Endothelial cell of umbilical vein (primary cell): ENCODE measurements at regions of chr1 and their contacts with region 1.

Region 1: GRCh38 chr1:32716312-32717148 is 14.0 kb upstream of the SYNC start:
- DNase-seq: no peak
- H3K4me3 ChIP-seq: no peak overlapping the region
- H3K27ac ChIP-seq: no peak overlapping the region
- H3K4me1 ChIP-seq: no peaks in the 10 kb centered on the region
- H3K27me3 ChIP-seq: no peaks in the 10 kb centered on the region
- CTCF ChIP-seq: no peak
- POLR2A ChIP-seq: no peak

Region 2: DNA sequence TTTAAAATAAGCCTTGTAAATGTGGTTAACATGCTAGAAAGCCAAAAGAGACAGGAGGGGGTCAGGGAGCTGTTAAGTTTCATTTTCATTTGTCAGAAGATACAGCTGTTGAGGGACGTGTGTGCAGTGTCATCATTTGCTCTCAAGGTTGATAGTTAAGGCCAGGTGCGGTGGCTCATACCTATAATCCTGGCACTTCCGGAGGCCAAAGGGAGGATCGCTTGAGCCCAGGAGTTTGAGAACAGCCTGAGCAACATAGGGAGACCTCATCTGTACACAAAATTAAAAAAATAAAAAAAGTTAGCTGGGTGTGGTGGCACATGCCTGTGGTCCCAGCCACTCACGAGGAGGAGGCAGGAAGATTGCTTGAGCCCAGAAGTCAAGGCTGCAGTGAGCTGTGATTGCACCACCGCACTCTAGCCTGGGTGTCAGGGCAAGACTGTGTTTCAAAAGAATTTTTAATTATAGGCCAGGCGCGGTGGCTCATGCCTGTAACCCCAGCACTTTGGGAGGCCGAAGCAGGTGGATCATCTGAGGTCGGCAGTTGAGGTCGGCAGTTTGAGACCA is 88.9 kb before region 1 on chr1:
- CTCF ChIA-PET with region 1: no interaction called
- POLR2A ChIA-PET with region 1: no interaction called
- dilution Hi-C with region 1: no loop called
- intact Hi-C with region 1: no loop called
- DNase-seq: no peak
- H3K4me3 ChIP-seq: no peak overlapping the region
- H3K27ac ChIP-seq: no peak overlapping the region
- H3K4me1 ChIP-seq: no peaks in the 10 kb centered on the region
- H3K27me3 ChIP-seq: no peaks in the 10 kb centered on the region
- CTCF ChIP-seq: no peak
- POLR2A ChIP-seq: no peak

Region 3: DNA sequence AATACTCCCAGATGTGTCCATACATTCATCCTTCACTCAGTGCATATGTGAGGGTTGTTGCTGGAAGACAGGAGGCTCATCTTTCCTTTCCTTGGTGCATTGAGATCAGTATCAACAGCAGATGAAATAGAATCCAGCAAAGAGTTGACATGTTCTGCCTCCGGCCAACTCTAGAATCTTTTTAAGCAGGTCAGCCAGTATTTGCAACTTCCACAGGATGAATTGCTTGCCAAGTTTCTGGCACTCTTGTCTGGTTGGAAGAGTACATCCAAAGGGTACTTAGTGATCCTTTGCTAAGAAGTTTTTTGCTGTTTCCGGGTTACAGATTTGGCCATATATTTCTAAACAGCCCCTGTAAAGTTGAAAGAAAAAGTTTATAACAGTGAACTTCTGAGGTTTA is 35.0 kb before region 1 on chr1:
- CTCF ChIA-PET with region 1: no interaction called
- POLR2A ChIA-PET with region 1: no interaction called
- dilution Hi-C with region 1: no loop called
- intact Hi-C with region 1: no loop called
- DNase-seq: no peak
- H3K4me3 ChIP-seq: no peak overlapping the region
- H3K27ac ChIP-seq: no peak overlapping the region
- H3K4me1 ChIP-seq: peaks cover 3% of the 10 kb centered on the region
- H3K27me3 ChIP-seq: no peaks in the 10 kb centered on the region
- CTCF ChIP-seq: no peak
- POLR2A ChIP-seq: no peak

Region 4: DNA sequence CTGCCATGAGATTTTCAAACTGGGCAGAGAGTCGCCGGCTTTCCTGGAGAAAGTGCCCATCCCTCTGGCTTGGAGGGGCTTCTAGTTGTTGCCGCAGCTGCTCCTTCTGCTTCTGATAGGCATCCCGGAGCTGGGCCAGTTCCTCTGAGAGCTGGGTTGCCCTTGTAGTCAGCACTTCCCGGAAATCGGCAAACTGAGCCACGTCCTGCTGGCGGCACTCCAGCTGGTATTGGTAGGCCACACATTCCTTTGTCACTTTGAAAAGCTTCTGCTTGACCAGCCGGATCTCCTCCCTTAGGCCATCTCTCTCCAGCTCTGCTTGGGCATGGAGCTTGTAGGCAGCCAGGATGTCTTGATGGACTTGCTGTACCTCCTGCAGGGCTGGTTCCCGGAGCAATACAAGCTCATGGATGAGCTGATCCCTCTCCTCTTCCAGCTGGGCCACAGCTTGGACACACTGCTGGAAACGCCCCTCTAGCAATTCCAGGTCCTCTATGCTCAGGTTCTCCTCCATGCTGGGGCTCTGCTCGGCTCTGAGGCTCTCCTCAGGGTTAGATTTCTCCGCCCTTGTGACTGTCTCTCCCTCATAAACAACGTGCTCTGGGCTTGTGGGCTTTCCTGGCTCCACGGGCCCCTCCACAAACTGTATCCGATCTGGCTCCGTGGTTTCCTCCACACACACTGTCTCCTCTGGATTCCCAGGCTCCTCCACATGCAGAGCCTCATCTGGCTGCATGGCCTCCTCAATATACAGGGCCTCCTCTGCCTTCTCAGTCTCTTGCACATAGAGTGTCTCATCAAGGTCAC is 21.2 kb before region 1 on chr1:
- CTCF ChIA-PET with region 1: interaction called, 21 read pairs
- POLR2A ChIA-PET with region 1: no interaction called
- dilution Hi-C with region 1: no loop called
- intact Hi-C with region 1: no loop called
- DNase-seq: peak; percentile 62
- H3K4me3 ChIP-seq: no peak overlapping the region
- H3K27ac ChIP-seq: no peak overlapping the region
- H3K4me1 ChIP-seq: peaks cover 9% of the 10 kb centered on the region
- H3K27me3 ChIP-seq: no peaks in the 10 kb centered on the region
- CTCF ChIP-seq: no peak
- POLR2A ChIP-seq: no peak

Region 5: GRCh38 chr1:32733582-32734321 is 17.2 kb after region 1 on chr1:
- CTCF ChIA-PET with region 1: interaction called, 19 read pairs
- POLR2A ChIA-PET with region 1: no interaction called
- dilution Hi-C with region 1: no loop called
- intact Hi-C with region 1: no loop called
- DNase-seq: no peak
- H3K4me3 ChIP-seq: no peak overlapping the region
- H3K27ac ChIP-seq: no peak overlapping the region
- H3K4me1 ChIP-seq: no peaks in the 10 kb centered on the region
- H3K27me3 ChIP-seq: peaks cover 0 to 2% of the 10 kb centered on the region in 2 experiments
- CTCF ChIP-seq: no peak
- POLR2A ChIP-seq: no peak

Region 6: GRCh38 chr1:32753532-32754312 is 37.2 kb after region 1 on chr1:
- CTCF ChIA-PET with region 1: interaction called, 23 read pairs
- POLR2A ChIA-PET with region 1: interaction called, 4 read pairs
- dilution Hi-C with region 1: no loop called
- intact Hi-C with region 1: loop called (anchors 1 kb)
- DNase-seq: peak; percentile 73
- H3K4me3 ChIP-seq: peak overlapping the region in 1 of 3 experiments; percentile 40
- H3K27ac ChIP-seq: no peak overlapping the region
- H3K4me1 ChIP-seq: peaks cover 2% of the 10 kb centered on the region
- H3K27me3 ChIP-seq: peaks cover 0 to 4% of the 10 kb centered on the region in 2 experiments
- CTCF ChIP-seq: no peak
- POLR2A ChIP-seq: no peak

Region 7: GRCh38 chr1:32773018-32773763 is 56.7 kb after region 1 on chr1:
- CTCF ChIA-PET with region 1: interaction called, 392 read pairs
- POLR2A ChIA-PET with region 1: no interaction called
- dilution Hi-C with region 1: no loop called
- intact Hi-C with region 1: loop called (anchors 1 kb)
- DNase-seq: peak; percentile 66
- H3K4me3 ChIP-seq: no peak overlapping the region
- H3K27ac ChIP-seq: no peak overlapping the region
- H3K4me1 ChIP-seq: peaks cover 21% of the 10 kb centered on the region
- H3K27me3 ChIP-seq: no peaks in the 10 kb centered on the region
- CTCF ChIP-seq: peak; percentile 92 to 95
- POLR2A ChIP-seq: no peak

Region 8: GRCh38 chr1:32791881-32792280 is 75.4 kb after region 1 on chr1:
- CTCF ChIA-PET with region 1: interaction called, 16 read pairs
- POLR2A ChIA-PET with region 1: no interaction called
- dilution Hi-C with region 1: no loop called
- intact Hi-C with region 1: loop called (anchors 1 kb)
- DNase-seq: no peak
- H3K4me3 ChIP-seq: no peak overlapping the region
- H3K27ac ChIP-seq: no peak overlapping the region
- H3K4me1 ChIP-seq: peaks cover 10% of the 10 kb centered on the region
- H3K27me3 ChIP-seq: no peaks in the 10 kb centered on the region
- CTCF ChIP-seq: no peak
- POLR2A ChIP-seq: no peak

Region 9: DNA sequence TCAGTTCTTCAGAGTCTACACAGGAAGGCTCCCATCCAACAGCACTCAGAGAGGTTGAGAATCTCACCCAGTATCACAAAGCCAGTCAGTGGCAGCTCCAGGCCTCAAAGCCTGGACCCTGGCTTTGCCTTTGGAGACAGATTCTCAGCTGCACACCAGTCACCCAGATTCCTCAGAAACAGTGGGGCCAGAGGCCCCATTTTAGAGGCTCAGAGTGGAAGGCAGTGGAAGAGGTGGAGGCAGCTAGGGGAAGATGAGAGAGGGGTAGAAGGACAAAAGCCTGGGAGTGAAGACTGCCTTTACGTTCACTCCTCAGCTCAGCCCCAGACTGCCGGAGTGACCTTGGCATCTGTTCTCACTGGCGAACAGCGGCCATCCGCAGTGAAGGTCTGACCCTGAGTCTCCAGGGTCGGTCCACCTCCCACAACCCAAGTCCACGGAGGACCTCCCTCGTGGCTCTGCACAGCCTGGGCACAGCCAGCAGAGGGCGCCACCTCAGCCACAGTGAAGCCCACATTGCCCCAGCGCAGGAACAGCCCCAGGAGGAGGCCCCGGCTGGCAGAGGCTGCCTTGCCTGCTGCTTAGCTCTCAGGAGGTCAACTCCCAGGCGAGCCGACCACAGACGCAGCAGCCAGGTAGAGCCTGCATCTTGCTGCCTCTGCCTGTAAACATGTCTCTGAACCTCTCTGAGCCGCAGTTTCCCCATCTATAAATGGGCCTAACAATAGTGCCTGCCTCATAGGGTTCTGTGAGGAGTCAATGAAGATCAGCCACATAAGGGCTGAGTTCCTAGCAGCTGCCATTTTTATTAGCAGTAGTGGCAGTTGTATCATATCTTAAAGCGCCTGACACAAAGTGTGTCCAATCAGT is 160.0 kb after region 1 on chr1:
- CTCF ChIA-PET with region 1: interaction called, 32 read pairs
- POLR2A ChIA-PET with region 1: no interaction called
- dilution Hi-C with region 1: no loop called
- intact Hi-C with region 1: loop called (anchors 1 kb)
- DNase-seq: peak; percentile 58
- H3K4me3 ChIP-seq: no peak overlapping the region
- H3K27ac ChIP-seq: no peak overlapping the region
- H3K4me1 ChIP-seq: no peaks in the 10 kb centered on the region
- H3K27me3 ChIP-seq: peaks cover 6 to 9% of the 10 kb centered on the region in 2 experiments
- CTCF ChIP-seq: peak; percentile 89 to 99
- POLR2A ChIP-seq: no peak